Activated B cell treated with CpG ODN at 0.5 μM for 24 hours (primary cell): ENCODE measurements at regions of chr3 and their contacts with region 1.

Region 1: GRCh38 chr3:15629860-15630597 is 28.5 kb downstream of the BTD start:
- DNase-seq: no peak
- ATAC-seq: peak; percentile 100
- H3K4me3 Mint-ChIP-seq: peak overlapping the region; percentile 56
- H3K27ac Mint-ChIP-seq: peak overlapping the region; percentile 41
- H3K4me1 Mint-ChIP-seq: peaks cover 14% of the 10 kb centered on the region
- H3K27me3 Mint-ChIP-seq: no peaks in the 10 kb centered on the region
- CTCF ChIP-seq: no peak

Region 2: DNA sequence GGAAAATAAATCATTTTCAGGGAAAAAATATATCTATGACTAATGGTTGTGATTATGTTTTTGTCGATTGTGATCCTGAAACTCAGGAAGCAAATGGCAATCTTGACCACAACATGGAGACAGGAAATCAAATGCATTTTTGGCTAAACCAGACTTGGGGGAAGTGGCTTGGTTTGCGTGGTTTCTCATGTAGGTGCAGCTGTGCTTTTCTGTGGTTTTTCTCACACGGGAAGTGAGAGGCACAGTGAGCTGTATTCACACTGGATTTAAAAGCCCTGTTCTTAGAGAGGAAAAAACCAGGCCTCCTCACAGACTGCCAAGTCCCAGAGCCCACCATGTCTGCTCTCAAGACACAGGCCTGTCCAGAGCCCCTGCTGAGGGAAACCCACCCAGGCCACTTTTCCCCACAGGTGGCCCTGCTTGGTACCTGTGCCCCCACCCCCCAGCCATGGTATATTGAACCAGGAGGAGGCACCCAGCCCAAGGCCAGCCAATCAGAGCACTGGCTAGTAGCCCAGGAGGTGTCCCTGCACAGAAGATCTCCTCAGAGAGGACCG is 17.7 kb after region 1 on chr3:
- CTCF ChIA-PET with region 1: interaction called, 5 read pairs
- POLR2A ChIA-PET with region 1: no interaction called
- intact Hi-C with region 1: loop called (anchors 1 kb)
- DNase-seq: peak; percentile 32
- ATAC-seq: peak; percentile 93
- H3K4me3 Mint-ChIP-seq: peak overlapping the region; percentile 68
- H3K27ac Mint-ChIP-seq: peak overlapping the region; percentile 83
- H3K4me1 Mint-ChIP-seq: peaks cover 45% of the 10 kb centered on the region
- H3K27me3 Mint-ChIP-seq: no peaks in the 10 kb centered on the region
- CTCF ChIP-seq: no peak

Region 3: GRCh38 chr3:15815696-15816095 is 185.7 kb after region 1 on chr3:
- CTCF ChIA-PET with region 1: interaction called, 52 read pairs
- POLR2A ChIA-PET with region 1: interaction called, 12 read pairs
- intact Hi-C with region 1: loop called (anchors 1 kb)
- DNase-seq: no peak
- ATAC-seq: no peak
- H3K4me3 Mint-ChIP-seq: no peak overlapping the region
- H3K27ac Mint-ChIP-seq: no peak overlapping the region
- H3K4me1 Mint-ChIP-seq: peaks cover 28% of the 10 kb centered on the region
- H3K27me3 Mint-ChIP-seq: no peaks in the 10 kb centered on the region
- CTCF ChIP-seq: no peak

Region 4: GRCh38 chr3:15953841-15954240 is 323.8 kb after region 1 on chr3:
- CTCF ChIA-PET with region 1: no interaction called
- POLR2A ChIA-PET with region 1: no interaction called
- intact Hi-C with region 1: loop called (anchors 10 kb)
- DNase-seq: no peak
- ATAC-seq: no peak
- H3K4me3 Mint-ChIP-seq: no peak overlapping the region
- H3K27ac Mint-ChIP-seq: no peak overlapping the region
- H3K4me1 Mint-ChIP-seq: no peaks in the 10 kb centered on the region
- H3K27me3 Mint-ChIP-seq: no peaks in the 10 kb centered on the region
- CTCF ChIP-seq: no peak

Region 5: DNA sequence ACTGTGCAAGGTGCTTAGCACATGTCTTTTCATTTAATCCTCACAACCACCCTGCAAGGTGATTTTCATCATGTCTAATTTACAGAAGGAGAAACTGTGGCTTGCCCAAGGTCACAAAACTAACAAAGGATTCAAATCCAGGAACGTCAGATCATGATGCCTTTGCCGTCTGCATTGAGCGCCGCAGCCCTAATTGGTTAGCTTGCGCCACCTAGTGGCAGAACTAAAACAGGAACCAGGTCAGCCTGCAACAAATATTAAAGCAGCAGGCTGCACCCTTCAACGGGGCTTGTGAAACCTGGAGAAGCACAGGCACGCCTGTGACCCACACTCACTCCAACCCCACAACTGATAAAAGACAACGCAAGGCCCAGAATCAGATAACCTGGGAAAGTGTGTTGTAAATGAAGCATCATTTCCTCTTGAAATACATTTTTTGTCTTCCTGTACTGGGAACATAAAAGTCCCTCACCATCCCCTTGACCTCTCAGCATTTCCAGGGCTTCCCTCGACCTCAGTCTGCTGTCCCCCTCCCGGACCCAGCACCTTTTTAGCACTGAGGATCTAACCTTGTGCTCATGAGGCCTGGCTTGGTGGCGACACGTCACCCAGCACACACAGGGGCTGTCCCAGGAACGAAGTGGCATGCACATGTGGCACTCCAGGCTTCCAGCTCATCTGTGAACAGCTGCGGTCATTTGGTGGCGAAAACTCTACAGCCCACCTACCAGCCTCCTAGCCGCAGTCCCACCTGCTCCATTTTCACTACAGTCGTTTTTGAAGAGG is 617.4 kb after region 1 on chr3:
- CTCF ChIA-PET with region 1: interaction called, 5 read pairs
- POLR2A ChIA-PET with region 1: no interaction called
- intact Hi-C with region 1: loop called (anchors 1 kb)
- DNase-seq: peak; percentile 43
- ATAC-seq: peak; percentile 90
- H3K4me3 Mint-ChIP-seq: no peak overlapping the region
- H3K27ac Mint-ChIP-seq: no peak overlapping the region
- H3K4me1 Mint-ChIP-seq: peaks cover 18% of the 10 kb centered on the region
- H3K27me3 Mint-ChIP-seq: peaks cover 9% of the 10 kb centered on the region
- CTCF ChIP-seq: peak; percentile 87